ENCODE measurements at regions of chr10 and their contacts with region 1.

Region 1: DNA sequence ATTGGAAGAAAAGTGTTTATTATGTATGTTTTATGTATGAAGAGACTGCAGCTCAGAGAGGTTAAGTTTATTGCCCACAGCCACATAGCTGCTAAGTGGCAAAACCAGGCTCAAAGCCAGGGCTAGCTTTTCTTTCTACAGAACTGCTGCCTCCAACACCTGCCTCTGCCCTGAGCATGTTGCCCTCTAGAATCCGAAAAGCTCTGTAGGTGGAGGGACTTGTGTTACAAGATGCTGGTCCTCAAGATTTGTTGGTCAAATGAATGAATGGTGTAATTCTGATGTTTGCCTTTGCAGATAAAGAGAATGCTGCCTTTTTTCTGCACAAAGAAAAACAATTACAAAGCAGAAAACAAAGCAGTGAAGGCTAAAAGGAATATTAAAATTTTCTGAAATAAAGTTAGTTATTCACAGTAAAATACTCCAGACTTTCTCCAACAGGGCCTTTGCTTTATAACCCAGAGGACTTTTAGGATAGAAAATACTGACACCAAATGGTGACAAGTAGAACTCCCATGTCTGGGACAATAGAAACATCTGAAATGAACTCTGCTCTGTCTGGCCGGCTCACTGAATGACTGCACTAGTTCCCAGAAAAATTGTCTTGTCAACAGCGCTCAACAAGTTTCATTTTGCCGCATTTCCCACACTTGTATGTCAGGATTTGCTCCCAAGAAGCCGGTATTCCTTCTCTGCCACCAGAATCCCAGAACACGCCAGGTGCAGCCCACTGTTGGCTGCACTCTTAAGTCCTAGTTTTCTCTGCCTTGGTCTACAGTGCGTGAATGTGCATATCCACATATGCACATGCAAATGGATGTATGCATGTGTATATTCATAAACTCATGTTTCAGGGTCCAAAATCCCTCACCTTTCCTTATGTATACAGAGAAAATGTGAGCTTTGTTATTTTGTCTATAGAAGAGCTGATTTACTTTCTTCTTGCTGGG is 11.0 kb upstream of the DNTT start:
- DNase-seq: no peak
- H3K4me3 ChIP-seq: no peak overlapping the region
- H3K27ac ChIP-seq: no peak overlapping the region
- H3K4me1 ChIP-seq: no peaks in the 10 kb centered on the region
- H3K27me3 ChIP-seq: no peaks in the 10 kb centered on the region
- CTCF ChIP-seq: peak; percentile 55

Region 2: GRCh38 chr10:96017191-96017687 is 276.0 kb before region 1 on chr10:
- CTCF ChIA-PET with region 1: interaction called, 3 read pairs
- POLR2A ChIA-PET with region 1: no interaction called
- intact Hi-C with region 1: loop called (anchors 1 kb)
- DNase-seq: peak; percentile 17 to 59
- H3K4me3 ChIP-seq: no peak overlapping the region
- H3K27ac ChIP-seq: no peak overlapping the region
- H3K4me1 ChIP-seq: no peaks in the 10 kb centered on the region
- H3K27me3 ChIP-seq: no peaks in the 10 kb centered on the region
- CTCF ChIP-seq: peak; percentile 71

Region 3: GRCh38 chr10:96138102-96138501 is 155.1 kb before region 1 on chr10:
- CTCF ChIA-PET with region 1: no interaction called
- POLR2A ChIA-PET with region 1: no interaction called
- intact Hi-C with region 1: loop called (anchors 5 kb)
- DNase-seq: no peak
- H3K4me3 ChIP-seq: no peak overlapping the region
- H3K27ac ChIP-seq: no peak overlapping the region
- H3K4me1 ChIP-seq: no peaks in the 10 kb centered on the region
- H3K27me3 ChIP-seq: no peaks in the 10 kb centered on the region
- CTCF ChIP-seq: no peak

Region 4: GRCh38 chr10:96229568-96230030 is 63.6 kb before region 1 on chr10:
- CTCF ChIA-PET with region 1: interaction called, 7 read pairs
- POLR2A ChIA-PET with region 1: no interaction called
- intact Hi-C with region 1: loop called (anchors 1 kb)
- DNase-seq: peak in 1 of 2 experiments; percentile 37
- H3K4me3 ChIP-seq: no peak overlapping the region
- H3K27ac ChIP-seq: no peak overlapping the region
- H3K4me1 ChIP-seq: no peaks in the 10 kb centered on the region
- H3K27me3 ChIP-seq: no peaks in the 10 kb centered on the region
- CTCF ChIP-seq: peak; percentile 81

Measured in PC-9 (cell line).